ENCODE measurements at regions of chr1 and their contacts with region 1.

Region 1: DNA sequence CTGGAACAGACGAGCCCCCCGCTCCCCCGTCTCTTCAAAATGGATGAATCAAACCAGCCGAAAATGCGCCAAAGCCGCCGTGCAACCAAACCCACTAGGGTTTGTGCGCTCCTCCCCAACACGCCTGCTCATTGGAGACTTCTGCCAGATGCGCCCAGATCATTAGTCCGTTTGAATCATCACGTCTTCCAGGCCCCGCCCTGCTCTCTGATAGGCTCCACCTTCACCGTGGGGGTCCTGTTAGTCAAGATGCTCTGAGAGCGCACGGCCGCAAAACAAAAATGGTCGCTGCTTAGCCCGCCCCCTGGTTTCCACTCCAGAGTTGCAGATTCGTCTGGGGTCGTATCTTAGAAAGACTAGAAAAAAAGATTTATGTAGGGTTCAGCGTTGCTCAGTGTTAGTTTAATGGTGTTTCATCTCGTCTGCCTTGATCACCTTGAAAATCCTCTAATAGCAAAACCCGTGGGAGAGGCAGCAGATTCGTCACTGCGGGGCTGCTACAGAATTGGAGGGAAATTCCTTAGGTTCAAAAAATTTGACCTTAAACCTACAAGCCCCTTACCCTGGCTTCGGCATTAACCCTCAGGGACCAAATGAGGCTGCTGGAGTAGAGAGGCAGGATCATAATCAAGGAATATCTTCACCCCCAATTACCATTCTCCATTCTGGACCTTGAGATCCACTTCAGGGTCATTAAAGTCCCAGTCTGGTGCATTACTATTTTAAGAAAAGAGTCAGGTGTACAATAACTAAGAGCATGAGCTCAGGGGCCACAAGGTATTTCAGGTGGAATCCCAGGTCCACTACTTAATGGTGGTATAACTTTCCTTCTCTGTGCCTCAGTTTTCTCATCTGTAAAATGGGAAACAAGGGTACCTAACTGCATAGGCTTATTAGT is at the start of gene NUCKS1:
- DNase-seq: peak; percentile 100
- H3K4me3 ChIP-seq: peak within 1 kb of the TSS; percentile 75 to 98 (median 91)
- H3K27ac ChIP-seq: peak within 1 kb of the TSS; percentile 99 to 100 (median 99)
- H3K4me1 ChIP-seq: peaks cover 0 to 36% (median 26%) of the 10 kb centered on the region in 4 donors
- H3K27me3 ChIP-seq: no peaks in the 10 kb centered on the region
- CTCF ChIP-seq: peak in 1 of 4 experiments; percentile 18
- EP300 ChIP-seq: no peak
- POLR2A ChIP-seq: peak; percentile 47 to 56
- total RNA-seq, gene NUCKS1: 88.9 to 112 (median 98.5) TPM

Region 2: DNA sequence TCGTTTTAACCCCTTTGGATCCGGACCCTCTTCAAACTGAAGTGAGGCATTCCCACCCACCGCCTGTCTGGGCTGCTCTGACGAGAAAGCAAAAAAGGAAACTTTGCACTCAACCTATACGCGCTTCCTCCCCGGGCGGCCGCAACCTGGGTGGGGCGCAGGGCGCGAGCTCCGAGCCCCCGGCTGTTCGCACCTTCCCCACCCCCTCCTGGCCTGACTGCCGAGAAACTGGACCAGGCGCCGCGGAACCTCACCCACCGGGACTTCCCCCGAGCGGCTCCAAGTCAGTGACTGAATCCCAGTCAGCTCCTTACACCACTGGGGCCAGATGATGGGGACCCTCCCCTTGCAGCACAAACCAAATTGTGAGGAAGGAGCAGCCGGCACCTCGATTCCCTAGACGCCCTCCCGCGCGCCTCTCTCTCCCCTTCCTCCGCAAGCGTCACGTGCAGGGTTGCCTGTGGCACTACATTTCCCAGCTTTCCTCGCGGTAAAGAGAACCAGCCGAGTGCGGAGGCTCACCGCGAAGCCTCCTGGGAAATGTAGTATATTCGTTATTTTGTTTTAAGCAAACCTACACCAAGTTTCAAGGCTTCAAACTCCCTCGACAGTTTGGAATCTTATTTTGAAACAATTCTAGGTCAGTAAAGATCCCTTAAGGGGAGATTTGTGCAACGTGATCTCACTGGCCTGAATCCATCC is 24.8 kb after region 1 on chr1 and contains the start of gene RAB29:
- intact Hi-C with region 1: loop called (anchors 2 kb)
- DNase-seq: peak; percentile 92
- H3K4me3 ChIP-seq: peak within 1 kb of the TSS; percentile 50 to 86 (median 74)
- H3K27ac ChIP-seq: peak within 1 kb of the TSS; percentile 49 to 80 (median 70)
- H3K4me1 ChIP-seq: peaks cover 0 to 17% (median 9%) of the 10 kb centered on the region in 4 donors
- H3K27me3 ChIP-seq: no peaks in the 10 kb centered on the region
- CTCF ChIP-seq: no peak
- EP300 ChIP-seq: no peak
- POLR2A ChIP-seq: peak in 1 of 2 donors; percentile 44
- total RNA-seq, gene RAB29: 19.8 to 28.5 (median 23.2) TPM